CD8-positive, alpha-beta T cell (primary cell): ENCODE measurements at regions of chr10 and their contacts with region 1.

Region 1: DNA sequence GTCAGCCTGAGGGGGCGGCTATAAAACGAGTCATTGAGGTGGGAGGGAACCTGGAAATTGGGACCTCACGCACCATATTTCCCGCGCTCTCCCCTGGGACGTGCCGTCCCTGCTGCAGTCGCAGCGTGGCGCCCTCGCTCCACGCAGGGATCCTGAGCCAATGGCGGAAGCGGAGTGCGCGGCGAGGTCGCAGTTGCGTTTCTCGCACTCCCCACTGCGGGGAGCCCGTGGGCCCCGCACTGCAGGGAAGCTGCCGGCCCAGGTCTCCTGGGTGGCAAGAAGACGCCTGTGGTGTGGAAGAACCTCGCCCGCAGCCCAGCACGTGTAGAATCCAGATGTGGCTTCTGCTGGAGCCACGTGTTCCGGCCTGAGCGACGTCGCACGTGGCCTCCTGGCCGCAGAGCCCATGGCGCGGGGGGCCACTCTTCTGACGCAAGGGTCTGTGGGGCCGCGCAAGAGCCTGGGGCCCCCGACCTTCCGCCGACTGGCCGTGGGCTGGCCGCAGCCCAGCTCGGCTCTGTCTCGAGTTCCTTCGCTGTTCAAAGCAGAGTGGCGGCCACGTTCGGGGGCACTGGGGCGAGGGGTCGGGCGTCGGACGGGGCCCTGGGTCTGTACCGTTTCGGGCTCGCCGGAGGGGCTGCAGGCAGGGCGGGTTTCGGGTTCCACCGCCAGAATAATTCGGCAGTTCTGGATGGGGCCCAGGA is 26.4 kb downstream of the HIF1AN start:
- DNase-seq: peak; percentile 58 to 88 (median 81)
- ATAC-seq: peak; percentile 100
- H3K4me3 ChIP-seq: peak overlapping the region; percentile 4 to 32
- H3K4me3 Mint-ChIP-seq: peak overlapping the region; percentile 53
- H3K27ac ChIP-seq: no peak overlapping the region
- H3K27ac Mint-ChIP-seq: no peak overlapping the region
- H3K4me1 ChIP-seq: peaks cover 16% of the 10 kb centered on the region
- H3K4me1 Mint-ChIP-seq: peaks cover 16% of the 10 kb centered on the region
- H3K27me3 ChIP-seq: peaks cover 0 to 8% of the 10 kb centered on the region in 2 experiments
- H3K27me3 Mint-ChIP-seq: peaks cover 33% of the 10 kb centered on the region
- CTCF ChIP-seq: peak; percentile 98

Region 2: DNA sequence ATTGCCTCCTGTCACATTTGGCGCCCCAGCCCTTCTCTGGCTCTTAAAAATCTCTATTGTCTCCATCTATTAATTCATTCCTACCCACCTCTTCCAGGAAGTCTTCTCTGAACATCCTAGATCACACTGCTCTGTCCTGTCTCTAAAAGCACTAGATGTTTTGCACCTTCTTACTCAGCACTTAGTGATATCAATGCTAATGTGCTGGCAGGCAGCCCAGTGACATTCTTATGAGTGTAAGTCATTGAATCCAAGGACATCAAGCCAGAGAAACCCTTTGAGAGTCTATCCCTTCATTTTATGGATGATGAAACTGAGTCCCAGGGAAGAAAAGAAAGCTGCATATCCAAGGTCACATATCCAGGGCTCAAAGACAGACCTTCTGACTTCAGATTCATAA is 134.9 kb after region 1 on chr10:
- CTCF ChIA-PET with region 1: no interaction called
- POLR2A ChIA-PET with region 1: no interaction called
- intact Hi-C with region 1: no loop called
- DNase-seq: no peak
- ATAC-seq: no peak
- H3K4me3 ChIP-seq: no peak overlapping the region
- H3K4me3 Mint-ChIP-seq: no peak overlapping the region
- H3K27ac ChIP-seq: no peak overlapping the region
- H3K27ac Mint-ChIP-seq: no peak overlapping the region
- H3K4me1 ChIP-seq: no peaks in the 10 kb centered on the region
- H3K4me1 Mint-ChIP-seq: no peaks in the 10 kb centered on the region
- H3K27me3 ChIP-seq: peaks cover 0 to 8% of the 10 kb centered on the region in 2 experiments
- H3K27me3 Mint-ChIP-seq: peaks cover 19% of the 10 kb centered on the region
- CTCF ChIP-seq: no peak

Region 3: GRCh38 chr10:100743626-100744135 is 181.5 kb after region 1 on chr10:
- CTCF ChIA-PET with region 1: interaction called, 15 read pairs
- POLR2A ChIA-PET with region 1: no interaction called
- intact Hi-C with region 1: loop called in 1 of 2 experiments (anchors 1 kb)
- DNase-seq: peak in 8 of 9 experiments; percentile 10 to 80 (median 40)
- ATAC-seq: peak; percentile 79
- H3K4me3 ChIP-seq: no peak overlapping the region
- H3K4me3 Mint-ChIP-seq: peak overlapping the region; percentile 22
- H3K27ac ChIP-seq: no peak overlapping the region
- H3K27ac Mint-ChIP-seq: no peak overlapping the region
- H3K4me1 ChIP-seq: peaks cover 43% of the 10 kb centered on the region
- H3K4me1 Mint-ChIP-seq: peaks cover 37% of the 10 kb centered on the region
- H3K27me3 ChIP-seq: peaks cover 45 to 67% of the 10 kb centered on the region in 2 experiments
- H3K27me3 Mint-ChIP-seq: peaks cover 69% of the 10 kb centered on the region
- CTCF ChIP-seq: peak; percentile 42

Region 4: DNA sequence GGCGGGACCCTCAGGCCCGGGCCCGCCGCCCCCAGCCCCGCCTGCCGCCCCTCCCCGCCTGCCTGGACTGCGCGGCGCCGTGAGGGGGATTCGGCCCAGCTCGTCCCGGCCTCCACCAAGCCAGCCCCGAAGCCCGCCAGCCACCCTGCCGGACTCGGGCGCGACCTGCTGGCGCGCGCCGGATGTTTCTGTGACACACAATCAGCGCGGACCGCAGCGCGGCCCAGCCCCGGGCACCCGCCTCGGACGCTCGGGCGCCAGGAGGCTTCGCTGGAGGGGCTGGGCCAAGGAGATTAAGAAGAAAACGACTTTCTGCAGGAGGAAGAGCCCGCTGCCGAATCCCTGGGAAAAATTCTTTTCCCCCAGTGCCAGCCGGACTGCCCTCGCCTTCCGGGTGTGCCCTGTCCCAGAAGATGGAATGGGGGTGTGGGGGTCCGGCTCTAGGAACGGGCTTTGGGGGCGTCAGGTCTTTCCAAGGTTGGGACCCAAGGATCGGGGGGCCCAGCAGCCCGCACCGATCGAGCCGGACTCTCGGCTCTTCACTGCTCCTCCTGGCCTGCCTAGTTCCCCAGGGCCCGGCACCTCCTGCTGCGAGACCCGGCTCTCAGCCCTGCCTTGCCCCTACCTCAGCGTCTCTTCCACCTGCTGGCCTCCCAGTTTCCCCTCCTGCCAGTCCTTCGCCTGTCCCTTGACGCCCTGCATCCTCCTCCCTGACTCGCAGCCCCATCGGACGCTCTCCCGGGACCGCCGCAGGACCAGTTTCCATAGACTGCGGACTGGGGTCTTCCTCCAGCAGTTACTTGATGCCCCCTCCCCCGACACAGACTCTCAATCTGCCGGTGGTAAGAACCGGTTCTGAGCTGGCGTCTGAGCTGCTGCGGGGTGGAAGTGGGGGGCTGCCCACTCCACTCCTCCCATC is 265.9 kb after region 1 on chr10:
- CTCF ChIA-PET with region 1: no interaction called
- POLR2A ChIA-PET with region 1: no interaction called
- intact Hi-C with region 1: loop called in 1 of 2 experiments (anchors 5 kb)
- DNase-seq: peak in 5 of 9 experiments; percentile 21 to 60 (median 42)
- ATAC-seq: peak; percentile 35
- H3K4me3 ChIP-seq: peak overlapping the region; percentile 47 to 52
- H3K4me3 Mint-ChIP-seq: peak overlapping the region; percentile 85
- H3K27ac ChIP-seq: no peak overlapping the region
- H3K27ac Mint-ChIP-seq: no peak overlapping the region
- H3K4me1 ChIP-seq: peaks cover 38% of the 10 kb centered on the region
- H3K4me1 Mint-ChIP-seq: peaks cover 25% of the 10 kb centered on the region
- H3K27me3 ChIP-seq: peaks cover 40 to 64% of the 10 kb centered on the region in 2 experiments
- H3K27me3 Mint-ChIP-seq: peaks cover 74% of the 10 kb centered on the region
- CTCF ChIP-seq: no peak

Region 5: GRCh38 chr10:100872034-100872791 is 310.1 kb after region 1 on chr10:
- CTCF ChIA-PET with region 1: no interaction called
- POLR2A ChIA-PET with region 1: no interaction called
- intact Hi-C with region 1: loop called in 1 of 2 experiments (anchors 1 kb)
- DNase-seq: peak in 8 of 9 experiments; percentile 4 to 55 (median 45)
- ATAC-seq: peak; percentile 62
- H3K4me3 ChIP-seq: no peak overlapping the region
- H3K4me3 Mint-ChIP-seq: no peak overlapping the region
- H3K27ac ChIP-seq: no peak overlapping the region
- H3K27ac Mint-ChIP-seq: no peak overlapping the region
- H3K4me1 ChIP-seq: no peaks in the 10 kb centered on the region
- H3K4me1 Mint-ChIP-seq: no peaks in the 10 kb centered on the region
- H3K27me3 ChIP-seq: no peaks in the 10 kb centered on the region
- H3K27me3 Mint-ChIP-seq: peaks cover 10% of the 10 kb centered on the region
- CTCF ChIP-seq: peak; percentile 33

Region 6: GRCh38 chr10:100878291-100878910 is 316.2 kb after region 1 on chr10:
- CTCF ChIA-PET with region 1: interaction called, 5 read pairs
- POLR2A ChIA-PET with region 1: no interaction called
- intact Hi-C with region 1: loop called (anchors 1 kb)
- DNase-seq: peak in 3 of 9 experiments; percentile 13 to 47 (median 32)
- ATAC-seq: peak; percentile 62
- H3K4me3 ChIP-seq: no peak overlapping the region
- H3K4me3 Mint-ChIP-seq: no peak overlapping the region
- H3K27ac ChIP-seq: no peak overlapping the region
- H3K27ac Mint-ChIP-seq: no peak overlapping the region
- H3K4me1 ChIP-seq: no peaks in the 10 kb centered on the region
- H3K4me1 Mint-ChIP-seq: no peaks in the 10 kb centered on the region
- H3K27me3 ChIP-seq: no peaks in the 10 kb centered on the region
- H3K27me3 Mint-ChIP-seq: peaks cover 13% of the 10 kb centered on the region
- CTCF ChIP-seq: no peak

Region 7: DNA sequence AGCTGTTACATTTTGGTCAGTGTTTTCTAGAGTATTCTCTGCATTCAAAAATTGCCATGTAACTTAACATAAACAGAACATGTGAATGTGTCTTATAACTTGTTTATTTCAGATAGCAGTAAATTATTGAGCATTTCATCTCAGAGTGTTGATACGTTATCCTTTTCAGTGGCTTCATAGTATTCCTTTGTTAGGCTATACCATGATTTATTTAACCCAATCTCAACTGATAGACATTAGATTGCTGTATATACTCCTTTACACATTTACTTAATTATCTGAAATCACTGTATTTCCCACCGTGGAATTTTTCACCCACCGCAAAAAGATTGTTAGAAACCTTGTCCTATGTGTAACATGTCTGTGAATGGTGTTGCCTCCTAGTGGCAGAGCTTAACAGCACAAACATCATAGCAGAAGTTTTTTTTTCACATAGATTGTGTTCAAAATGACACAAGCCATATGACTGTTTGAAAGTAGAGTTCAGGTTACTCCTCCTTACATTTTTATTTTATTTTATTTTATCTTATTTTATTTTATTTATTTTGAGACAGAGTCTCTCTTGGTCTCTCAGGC is 372.0 kb after region 1 on chr10:
- CTCF ChIA-PET with region 1: no interaction called
- POLR2A ChIA-PET with region 1: no interaction called
- intact Hi-C with region 1: loop called in 1 of 2 experiments (anchors 1 kb)
- DNase-seq: peak in 2 of 9 experiments; percentile 8 to 30
- ATAC-seq: peak; percentile 36
- H3K4me3 ChIP-seq: no peak overlapping the region
- H3K4me3 Mint-ChIP-seq: no peak overlapping the region
- H3K27ac ChIP-seq: no peak overlapping the region
- H3K27ac Mint-ChIP-seq: no peak overlapping the region
- H3K4me1 ChIP-seq: no peaks in the 10 kb centered on the region
- H3K4me1 Mint-ChIP-seq: no peaks in the 10 kb centered on the region
- H3K27me3 ChIP-seq: no peaks in the 10 kb centered on the region
- H3K27me3 Mint-ChIP-seq: no peaks in the 10 kb centered on the region
- CTCF ChIP-seq: peak; percentile 49

Region 8: DNA sequence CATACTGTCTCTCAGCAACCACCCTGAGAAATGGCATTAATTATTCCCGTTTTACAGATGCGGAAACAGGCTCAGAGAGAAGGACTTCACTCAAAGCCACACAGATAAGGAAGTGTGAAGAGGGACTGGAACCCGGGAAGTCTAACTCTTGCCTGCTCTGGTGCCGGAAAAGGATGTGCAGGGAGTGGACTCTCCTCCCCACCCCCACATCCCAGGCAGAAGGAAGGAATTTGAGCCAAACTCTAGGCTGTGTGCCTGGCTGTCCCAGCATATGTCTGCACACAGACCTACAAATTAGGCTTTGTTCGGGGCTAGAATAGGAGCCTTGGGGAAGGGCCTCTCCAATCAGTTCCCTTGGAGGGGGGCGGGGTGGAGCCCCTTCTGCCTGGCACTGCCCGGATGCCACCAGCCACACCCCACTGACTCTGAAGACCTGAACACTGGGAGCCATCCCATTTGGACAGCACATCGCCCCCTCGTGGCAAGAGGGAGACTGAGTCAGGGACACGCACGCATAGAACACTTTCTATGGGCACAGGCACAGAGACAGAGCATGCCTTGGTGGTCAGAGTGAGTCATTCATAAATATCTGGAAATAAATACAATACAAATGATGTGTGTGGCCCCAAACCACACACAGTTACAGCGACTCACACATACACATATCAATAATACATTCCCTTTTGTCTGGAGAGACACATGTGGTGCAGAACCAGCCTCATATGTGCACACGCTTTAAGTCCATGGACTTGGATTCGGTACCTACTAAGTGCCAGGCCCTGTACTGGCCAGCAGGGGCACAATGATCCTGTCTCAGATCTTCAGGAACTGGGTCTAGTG is 450.6 kb after region 1 on chr10:
- CTCF ChIA-PET with region 1: interaction called, 4 read pairs
- POLR2A ChIA-PET with region 1: no interaction called
- intact Hi-C with region 1: loop called (anchors 1 kb)
- DNase-seq: peak; percentile 41 to 85 (median 78)
- ATAC-seq: peak; percentile 86
- H3K4me3 ChIP-seq: no peak overlapping the region
- H3K4me3 Mint-ChIP-seq: no peak overlapping the region
- H3K27ac ChIP-seq: no peak overlapping the region
- H3K27ac Mint-ChIP-seq: no peak overlapping the region
- H3K4me1 ChIP-seq: peaks cover 6% of the 10 kb centered on the region
- H3K4me1 Mint-ChIP-seq: peaks cover 13% of the 10 kb centered on the region
- H3K27me3 ChIP-seq: peaks cover 13 to 16% of the 10 kb centered on the region in 2 experiments
- H3K27me3 Mint-ChIP-seq: peaks cover 33% of the 10 kb centered on the region
- CTCF ChIP-seq: peak; percentile 83